Activated CD4-positive, alpha-beta memory T cell treated with anti-CD3 and anti-CD28 coated beads for 36 hours (primary cell): ENCODE measurements at regions of chr7 and their contacts with region 1.

Region 1: GRCh38 chr7:66844552-66845378 is 76.3 kb upstream of the TMEM248 start:
- DNase-seq: peak; percentile 99
- H3K4me3 Mint-ChIP-seq: peak overlapping the region; percentile 89
- H3K27ac Mint-ChIP-seq: peak overlapping the region; percentile 98
- H3K4me1 Mint-ChIP-seq: peaks cover 31% of the 10 kb centered on the region
- H3K27me3 Mint-ChIP-seq: peaks cover 2% of the 10 kb centered on the region

Region 2: DNA sequence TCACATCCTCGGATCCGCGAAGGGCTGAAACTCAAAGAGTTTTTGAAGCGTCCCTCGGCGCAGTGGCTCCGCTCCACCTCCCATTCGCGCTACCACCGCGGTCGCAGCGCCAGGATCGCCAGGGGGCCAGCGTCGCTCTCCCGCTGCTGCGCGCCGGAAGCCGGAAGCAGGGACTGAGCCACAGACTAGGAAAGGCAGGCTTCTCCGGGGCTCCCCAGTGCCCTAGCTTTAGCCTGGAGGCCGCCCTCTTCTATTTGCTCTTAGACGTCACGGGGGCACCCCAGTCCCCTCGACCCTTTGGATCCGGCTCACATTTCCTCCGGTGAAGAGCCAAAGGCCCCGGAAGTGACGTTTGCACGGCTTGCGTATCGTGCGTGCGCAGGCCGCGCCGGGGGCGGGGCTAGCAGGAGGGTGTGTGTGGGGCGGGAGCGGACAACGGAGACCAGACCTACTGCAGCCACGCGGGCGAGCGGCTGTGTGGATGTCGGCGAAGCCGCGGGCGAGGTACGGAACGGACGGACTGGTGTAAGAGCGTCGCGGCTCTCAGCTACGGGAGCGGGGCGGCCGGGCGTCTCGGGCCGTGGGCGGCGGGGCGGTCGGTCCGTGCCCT is 190.5 kb before region 1 on chr7:
- CTCF ChIA-PET with region 1: no interaction called
- POLR2A ChIA-PET with region 1: interaction called, 4 read pairs
- intact Hi-C with region 1: loop called (anchors 10 kb)
- DNase-seq: peak; percentile 98
- H3K4me3 Mint-ChIP-seq: peak overlapping the region; percentile 94
- H3K27ac Mint-ChIP-seq: peak overlapping the region; percentile 96
- H3K4me1 Mint-ChIP-seq: peaks cover 23% of the 10 kb centered on the region
- H3K27me3 Mint-ChIP-seq: no peaks in the 10 kb centered on the region

Region 3: GRCh38 chr7:66859794-66860645 is 15.3 kb after region 1 on chr7:
- CTCF ChIA-PET with region 1: interaction called, 16 read pairs
- POLR2A ChIA-PET with region 1: interaction called, 20 read pairs
- intact Hi-C with region 1: loop called (anchors 1 kb)
- DNase-seq: peak; percentile 79
- H3K4me3 Mint-ChIP-seq: peak overlapping the region; percentile 53
- H3K27ac Mint-ChIP-seq: peak overlapping the region; percentile 93
- H3K4me1 Mint-ChIP-seq: peaks cover 23% of the 10 kb centered on the region
- H3K27me3 Mint-ChIP-seq: no peaks in the 10 kb centered on the region

Region 4: DNA sequence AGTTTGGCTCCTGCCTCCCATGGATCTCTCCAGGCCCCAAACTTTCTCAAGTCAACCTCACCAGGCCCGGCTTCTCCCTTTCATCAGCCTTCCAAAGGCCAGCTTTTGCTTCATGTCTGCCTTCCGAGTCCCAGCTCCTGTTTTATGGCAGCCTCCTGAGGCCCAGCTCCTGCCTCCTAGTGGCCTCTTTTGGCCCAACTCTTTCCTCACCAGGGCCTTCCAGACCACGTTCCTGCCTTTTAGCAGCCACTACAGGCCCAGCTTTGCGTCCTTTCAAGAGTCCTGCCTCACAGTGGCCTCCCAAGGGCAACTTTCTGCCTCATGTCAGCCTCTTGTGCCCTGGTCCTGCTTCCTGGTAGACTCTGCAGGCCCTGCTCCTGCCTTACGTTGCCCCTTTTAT is 60.9 kb after region 1 on chr7:
- CTCF ChIA-PET with region 1: interaction called, 12 read pairs
- POLR2A ChIA-PET with region 1: interaction called, 4 read pairs
- intact Hi-C with region 1: no loop called
- DNase-seq: no peak
- H3K4me3 Mint-ChIP-seq: no peak overlapping the region
- H3K27ac Mint-ChIP-seq: no peak overlapping the region
- H3K4me1 Mint-ChIP-seq: no peaks in the 10 kb centered on the region
- H3K27me3 Mint-ChIP-seq: no peaks in the 10 kb centered on the region

Region 5: GRCh38 chr7:67302113-67303039 is 457.6 kb after region 1 on chr7:
- CTCF ChIA-PET with region 1: no interaction called
- POLR2A ChIA-PET with region 1: no interaction called
- intact Hi-C with region 1: loop called (anchors 2 kb)
- DNase-seq: peak; percentile 99
- H3K4me3 Mint-ChIP-seq: peak overlapping the region; percentile 88
- H3K27ac Mint-ChIP-seq: peak overlapping the region; percentile 94
- H3K4me1 Mint-ChIP-seq: peaks cover 17% of the 10 kb centered on the region
- H3K27me3 Mint-ChIP-seq: no peaks in the 10 kb centered on the region